GM23248 (cell line): ENCODE measurements at regions of chr16 and their contacts with region 1.

Region 1: GRCh38 chr16:83967806-83968305 is at the start of gene NECAB2:
- DNase-seq: peak; percentile 73
- H3K4me3 ChIP-seq: peak within 1 kb of the TSS; percentile 65; the same call in 1 of the 2 replicates
- H3K27ac ChIP-seq: no peak within 1 kb of the TSS
- H3K4me1 ChIP-seq: no peaks in the 10 kb centered on the region
- H3K27me3 ChIP-seq: no peaks in the 10 kb centered on the region; the same call in 1 of the 2 replicates
- total RNA-seq, gene NECAB2: not detected in 2 replicates

Region 2: DNA sequence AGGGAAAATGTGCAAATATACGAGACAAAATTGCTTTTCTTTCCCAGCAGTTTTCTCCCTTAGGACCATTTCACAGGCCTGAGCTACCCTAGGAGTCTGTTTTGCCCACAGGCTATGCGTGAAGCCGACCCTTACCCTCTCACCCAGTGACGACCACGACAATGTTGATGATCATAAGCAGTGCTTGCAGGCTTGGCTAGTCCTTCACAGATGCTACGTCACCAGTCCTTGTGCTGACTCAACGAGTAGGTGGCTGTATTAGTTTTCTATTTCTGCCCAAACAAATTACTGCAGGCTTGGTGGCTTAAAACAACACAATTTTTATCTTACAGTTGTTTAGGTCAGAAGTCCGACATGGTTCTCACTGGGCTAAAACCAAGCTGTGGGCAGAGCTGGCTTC is 734.7 kb before region 1 on chr16:
- in situ Hi-C with region 1: no loop called
- DNase-seq: peak; percentile 69
- H3K4me3 ChIP-seq: no peak overlapping the region
- H3K27ac ChIP-seq: no peak overlapping the region
- H3K4me1 ChIP-seq: no peaks in the 10 kb centered on the region
- H3K27me3 ChIP-seq: no peaks in the 10 kb centered on the region

Region 3: GRCh38 chr16:84048270-84048669 is 80.4 kb after region 1 on chr16:
- in situ Hi-C with region 1: loop called (anchors 5 kb)
- DNase-seq: no peak
- H3K4me3 ChIP-seq: no peak overlapping the region
- H3K27ac ChIP-seq: no peak overlapping the region
- H3K4me1 ChIP-seq: no peaks in the 10 kb centered on the region
- H3K27me3 ChIP-seq: no peaks in the 10 kb centered on the region

Region 4: GRCh38 chr16:84380405-84380804 is 412.5 kb after region 1 on chr16:
- in situ Hi-C with region 1: no loop called
- DNase-seq: no peak
- H3K4me3 ChIP-seq: no peak overlapping the region
- H3K27ac ChIP-seq: no peak overlapping the region
- H3K4me1 ChIP-seq: no peaks in the 10 kb centered on the region
- H3K27me3 ChIP-seq: peaks cover 21% of the 10 kb centered on the region; the same call in 1 of the 2 replicates

Region 5: GRCh38 chr16:84995663-84996062 is 1027.8 kb after region 1 on chr16:
- in situ Hi-C with region 1: no loop called
- DNase-seq: no peak
- H3K4me3 ChIP-seq: no peak overlapping the region
- H3K27ac ChIP-seq: peak overlapping the region; percentile 97
- H3K4me1 ChIP-seq: peaks cover 48% of the 10 kb centered on the region
- H3K27me3 ChIP-seq: no peaks in the 10 kb centered on the region